ENCODE measurements at regions of chr20 and their contacts with region 1.

Region 1: DNA sequence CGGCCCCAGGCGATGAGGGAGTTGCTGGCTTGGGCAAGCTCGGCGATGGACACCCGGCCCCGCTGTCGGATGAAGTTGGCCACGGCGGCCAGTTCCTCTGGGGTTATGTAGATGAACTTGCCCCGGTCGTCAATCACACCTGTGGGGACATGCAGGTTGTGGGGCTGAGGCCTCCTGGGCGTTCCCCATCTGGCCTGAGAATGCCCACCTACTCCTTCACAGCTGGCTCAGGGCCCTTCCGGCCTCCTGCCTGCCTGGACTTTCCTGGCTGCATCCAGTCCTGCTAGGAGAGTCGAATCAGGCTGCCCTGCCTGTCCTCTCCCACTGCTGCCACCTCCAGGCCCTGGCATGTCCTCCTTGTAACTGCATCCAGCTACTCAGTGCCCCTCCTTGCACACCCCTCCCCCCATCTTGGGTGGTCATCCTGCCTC is 13.8 kb downstream of the DDRGK1 start:
- DNase-seq: no peak
- H3K4me3 ChIP-seq: no peak overlapping the region
- H3K27ac ChIP-seq: peak overlapping the region in 55 of 59 donors; percentile 4 to 94 (median 65)
- H3K27me3 ChIP-seq: no peaks in the 10 kb centered on the region
- CTCF ChIP-seq: no peak

Region 2: DNA sequence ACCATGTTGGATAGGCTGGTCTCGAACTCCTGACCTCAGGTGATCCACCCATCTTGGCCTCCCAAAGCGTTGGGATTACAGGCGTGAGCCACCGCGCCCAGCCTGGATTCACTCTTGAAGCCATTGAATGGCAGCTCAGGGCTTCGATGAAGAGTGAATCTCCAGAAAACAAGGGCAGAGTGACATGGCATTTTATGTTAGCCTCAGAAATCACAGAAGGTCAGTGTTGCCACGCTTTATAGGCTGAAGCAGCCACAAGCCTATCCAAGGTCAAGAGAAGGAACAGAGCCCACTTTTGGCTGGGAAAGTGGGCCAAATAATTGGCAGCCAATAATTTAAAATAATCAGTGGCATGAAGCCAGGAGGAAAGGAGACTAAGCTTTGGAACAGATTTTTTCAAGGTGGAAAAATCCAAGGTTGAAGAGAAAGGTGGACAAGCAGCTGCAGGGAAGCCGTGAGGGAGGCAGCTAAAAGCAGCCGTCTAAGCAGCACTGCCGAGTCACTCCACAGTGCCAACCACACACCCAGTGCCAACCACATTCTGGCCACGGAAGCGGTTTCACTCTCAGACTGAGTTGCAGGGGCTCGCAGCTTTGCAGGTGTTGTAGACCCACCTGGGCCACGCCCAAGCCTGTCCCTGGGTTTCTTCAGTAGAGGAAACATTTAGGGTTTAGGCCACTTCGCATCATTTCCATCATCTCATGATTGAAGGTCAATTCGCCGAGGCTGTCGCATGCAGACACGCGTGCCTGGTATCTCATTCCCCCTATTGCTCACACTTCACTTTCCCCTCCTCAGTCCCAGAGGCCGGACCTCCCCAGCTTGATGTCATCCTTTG is 88.7 kb before region 1 on chr20:
- intact Hi-C with region 1: loop called in 1 of 2 experiments (anchors 2 kb)
- DNase-seq: peak in 4 of 10 donors; percentile 36 to 74 (median 60)
- H3K4me3 ChIP-seq: peak overlapping the region in 1 of 59 donors; percentile 5
- H3K27ac ChIP-seq: peak overlapping the region in 57 of 59 donors; percentile 1 to 93 (median 76)
- H3K27me3 ChIP-seq: no peaks in the 10 kb centered on the region
- CTCF ChIP-seq: no peak

Region 3: GRCh38 chr20:3204124-3204822 is 13.6 kb after region 1 on chr20 and contains the start of gene DDRGK1:
- intact Hi-C with region 1: no loop called
- DNase-seq: peak; percentile 80 to 93 (median 89)
- H3K4me3 ChIP-seq: peak within 1 kb of the TSS; percentile 61 to 99 (median 91)
- H3K27ac ChIP-seq: peak within 1 kb of the TSS; percentile 58 to 97 (median 89)
- H3K27me3 ChIP-seq: no peaks in the 10 kb centered on the region
- CTCF ChIP-seq: peak in 19 of 56 donors; percentile 8 to 44 (median 20)
- total RNA-seq, gene DDRGK1: 98.5 to 184 (median 132) TPM

Region 4: GRCh38 chr20:3696200-3696599 is 505.5 kb after region 1 on chr20:
- intact Hi-C with region 1: loop called in 1 of 2 experiments (anchors 5 kb)
- DNase-seq: no peak
- H3K4me3 ChIP-seq: no peak overlapping the region
- H3K27ac ChIP-seq: no peak overlapping the region
- H3K27me3 ChIP-seq: no peaks in the 10 kb centered on the region
- CTCF ChIP-seq: peak in 13 of 56 donors; percentile 7 to 41 (median 18)